GM12878 (cell line): ENCODE measurements at regions of chr9 and their contacts with region 1.

Region 1: DNA sequence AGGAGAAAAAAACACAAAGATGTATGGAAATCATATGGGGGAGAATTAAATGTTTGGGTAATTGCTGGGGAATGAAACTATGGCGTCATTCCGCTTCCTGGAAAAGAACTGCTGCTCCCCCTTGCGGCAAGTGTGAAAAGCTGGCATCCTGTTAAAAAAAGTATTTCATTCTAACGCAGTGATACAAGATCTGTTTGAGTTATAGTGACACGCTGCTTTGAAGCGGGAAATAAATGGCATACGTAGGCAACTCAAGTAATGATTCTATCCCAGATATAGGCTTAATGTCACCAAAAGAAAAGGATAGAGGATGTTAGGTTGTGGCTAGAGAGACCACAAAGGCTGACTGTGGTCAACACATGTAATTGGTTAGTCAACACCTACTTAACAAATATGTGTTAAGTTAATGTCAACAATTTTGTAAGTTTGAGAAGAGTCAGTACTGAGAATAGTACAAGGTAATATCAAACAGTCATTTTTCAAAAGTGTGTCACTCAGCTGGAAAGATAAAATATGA is 70.2 kb upstream of the ALDH1A1 start:
- DNase-seq: peak; percentile 3
- ATAC-seq: peak; percentile 64
- H3K4me3 ChIP-seq: no peak overlapping the region
- H3K27ac ChIP-seq: no peak overlapping the region
- H3K4me1 ChIP-seq: no peaks in the 10 kb centered on the region
- H3K27me3 ChIP-seq: no peaks in the 10 kb centered on the region; a peak in 1 of 4 replicates
- CTCF ChIP-seq: peak; percentile 65 to 78 (median 70); a peak in 5 of 6 replicates
- EP300 ChIP-seq: no peak
- POLR2A ChIP-seq: no peak
- RAD21 ChIP-seq: peak; percentile 63

Region 2: DNA sequence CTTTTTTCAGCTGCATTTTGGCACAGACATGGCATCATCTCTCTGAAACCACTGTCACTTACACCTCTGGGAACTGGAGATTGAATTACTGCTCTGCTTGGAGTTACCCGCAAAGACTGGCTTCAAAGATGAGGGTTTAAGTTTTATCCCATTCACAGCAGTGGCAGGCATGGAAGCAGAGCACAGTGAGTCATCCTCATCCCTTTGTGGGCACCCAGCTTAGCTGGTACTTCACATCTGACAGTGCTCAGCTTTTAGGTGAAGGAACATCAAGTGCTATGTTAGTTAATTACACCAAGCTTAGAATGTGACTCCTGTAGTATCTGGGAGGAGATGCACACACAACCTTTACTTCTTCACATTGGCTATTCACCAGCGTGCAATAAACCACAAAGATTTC is 45.4 kb before region 1 on chr9:
- CTCF ChIA-PET with region 1: no interaction called
- POLR2A ChIA-PET with region 1: no interaction called
- RAD21 ChIA-PET with region 1: no interaction called
- SMC1A ChIA-PET with region 1: no interaction called
- in situ Hi-C with region 1: no loop called
- intact Hi-C with region 1: no loop called
- DNase-seq: no peak
- ATAC-seq: no peak
- H3K4me3 ChIP-seq: no peak overlapping the region
- H3K27ac ChIP-seq: no peak overlapping the region
- H3K4me1 ChIP-seq: no peaks in the 10 kb centered on the region
- H3K27me3 ChIP-seq: no peaks in the 10 kb centered on the region
- CTCF ChIP-seq: no peak
- EP300 ChIP-seq: no peak
- POLR2A ChIP-seq: no peak
- RAD21 ChIP-seq: no peak

Region 3: GRCh38 chr9:73038613-73039012 is 15.5 kb after region 1 on chr9:
- CTCF ChIA-PET with region 1: interaction called, 12 read pairs
- POLR2A ChIA-PET with region 1: no interaction called
- RAD21 ChIA-PET with region 1: no interaction called
- SMC1A ChIA-PET with region 1: no interaction called
- in situ Hi-C with region 1: no loop called
- intact Hi-C with region 1: no loop called
- DNase-seq: no peak
- ATAC-seq: no peak
- H3K4me3 ChIP-seq: no peak overlapping the region
- H3K27ac ChIP-seq: no peak overlapping the region
- H3K4me1 ChIP-seq: no peaks in the 10 kb centered on the region
- H3K27me3 ChIP-seq: no peaks in the 10 kb centered on the region
- CTCF ChIP-seq: no peak
- EP300 ChIP-seq: no peak
- POLR2A ChIP-seq: no peak
- RAD21 ChIP-seq: no peak

Region 4: GRCh38 chr9:73149371-73150067 is 126.4 kb after region 1 on chr9:
- CTCF ChIA-PET with region 1: no interaction called
- POLR2A ChIA-PET with region 1: no interaction called
- RAD21 ChIA-PET with region 1: no interaction called
- SMC1A ChIA-PET with region 1: no interaction called
- in situ Hi-C with region 1: no loop called
- intact Hi-C with region 1: no loop called
- DNase-seq: peak; percentile 21
- ATAC-seq: peak; percentile 85
- H3K4me3 ChIP-seq: no peak overlapping the region
- H3K27ac ChIP-seq: no peak overlapping the region
- H3K4me1 ChIP-seq: peaks cover 10% of the 10 kb centered on the region
- H3K27me3 ChIP-seq: no peaks in the 10 kb centered on the region
- CTCF ChIP-seq: no peak
- EP300 ChIP-seq: peak in 1 of 2 experiments; percentile 47; a peak in 1 of 4 replicates
- POLR2A ChIP-seq: no peak
- RAD21 ChIP-seq: no peak

Region 5: DNA sequence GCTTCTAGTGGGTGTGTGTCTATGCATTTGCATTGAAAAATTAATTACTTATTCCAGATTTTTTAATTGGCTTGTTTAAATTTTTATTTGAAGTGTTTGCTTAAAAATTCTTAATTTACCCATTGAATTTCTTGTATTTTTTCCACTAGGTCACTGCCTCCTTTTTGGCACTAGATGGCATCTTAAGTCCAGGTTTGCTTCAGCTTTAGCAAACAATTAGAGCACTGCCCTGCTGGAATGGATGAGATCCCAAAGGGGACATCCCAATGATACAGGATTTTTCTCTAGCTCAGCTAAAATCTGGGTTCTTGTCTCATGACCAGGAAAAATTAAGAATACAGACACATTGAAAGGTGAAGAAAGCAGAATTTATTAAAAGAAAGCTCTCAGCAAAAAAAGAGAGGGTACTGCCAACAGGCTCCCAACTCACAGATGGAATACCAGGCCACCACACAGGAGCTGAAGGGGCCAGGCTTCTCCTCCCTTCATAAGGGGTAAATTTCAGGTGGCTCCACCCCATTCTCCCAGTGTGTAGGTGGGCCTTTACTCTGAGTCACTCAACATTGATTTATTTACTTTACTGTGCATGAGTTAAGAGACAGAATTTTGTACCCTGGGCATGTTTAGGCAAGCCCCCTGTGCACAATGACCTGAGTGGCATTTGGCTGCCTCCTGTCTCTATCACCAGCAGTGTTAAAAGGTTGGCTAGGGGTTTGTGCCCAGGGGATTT is 660.9 kb after region 1 on chr9:
- CTCF ChIA-PET with region 1: no interaction called
- POLR2A ChIA-PET with region 1: no interaction called
- RAD21 ChIA-PET with region 1: no interaction called
- SMC1A ChIA-PET with region 1: no interaction called
- in situ Hi-C with region 1: no loop called
- intact Hi-C with region 1: no loop called
- DNase-seq: no peak
- ATAC-seq: peak; percentile 87
- H3K4me3 ChIP-seq: no peak overlapping the region
- H3K27ac ChIP-seq: no peak overlapping the region
- H3K4me1 ChIP-seq: no peaks in the 10 kb centered on the region
- H3K27me3 ChIP-seq: no peaks in the 10 kb centered on the region
- CTCF ChIP-seq: peak; percentile 47 to 67 (median 53); a peak in 5 of 6 replicates
- EP300 ChIP-seq: no peak
- POLR2A ChIP-seq: no peak
- RAD21 ChIP-seq: peak; percentile 88